SK-N-SH (cell line): ENCODE measurements at regions of chr16 and their contacts with region 1.

Region 1: DNA sequence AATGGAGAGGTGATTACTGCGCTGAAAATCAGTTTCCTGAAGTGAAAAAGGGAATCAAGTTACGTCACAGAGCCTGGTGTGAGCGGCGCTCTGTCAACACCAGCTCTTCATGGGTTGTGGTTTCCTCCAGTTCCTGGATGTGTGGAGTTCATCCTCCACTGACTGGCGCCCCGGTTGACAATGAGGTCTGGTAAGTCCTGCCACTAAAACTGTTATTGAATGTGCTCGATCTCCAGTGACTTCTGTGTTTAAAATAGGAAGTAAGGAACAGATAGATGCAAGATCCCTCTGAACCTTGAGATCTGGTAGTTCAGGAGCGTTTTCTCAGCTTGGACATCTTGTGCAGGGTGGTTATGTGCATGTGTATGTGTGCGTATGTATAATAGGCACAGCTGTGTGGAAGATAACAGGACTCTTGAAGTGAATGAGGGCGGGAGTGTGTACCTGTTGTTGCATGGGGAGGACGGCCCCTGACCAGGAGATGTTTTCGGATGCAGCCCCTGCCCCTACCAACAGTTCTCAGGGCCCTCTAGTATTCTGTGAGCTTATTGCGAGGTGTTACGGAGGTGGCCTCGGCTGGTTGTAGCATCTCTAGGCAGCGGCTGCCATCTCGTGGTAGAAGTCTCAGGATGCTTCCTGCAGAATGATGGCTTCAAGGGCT is 22.0 kb upstream of the GOT2 start:
- DNase-seq: peak; percentile 75
- H3K4me3 ChIP-seq: no peak overlapping the region; a peak in 1 of 4 replicates
- H3K27ac ChIP-seq: no peak overlapping the region
- H3K4me1 ChIP-seq: no peaks in the 10 kb centered on the region
- H3K27me3 ChIP-seq: no peaks in the 10 kb centered on the region; the same call in 1 of the 2 replicates
- CTCF ChIP-seq: peak; percentile 71
- EP300 ChIP-seq: no peak
- RAD21 ChIP-seq: peak; percentile 94

Region 2: DNA sequence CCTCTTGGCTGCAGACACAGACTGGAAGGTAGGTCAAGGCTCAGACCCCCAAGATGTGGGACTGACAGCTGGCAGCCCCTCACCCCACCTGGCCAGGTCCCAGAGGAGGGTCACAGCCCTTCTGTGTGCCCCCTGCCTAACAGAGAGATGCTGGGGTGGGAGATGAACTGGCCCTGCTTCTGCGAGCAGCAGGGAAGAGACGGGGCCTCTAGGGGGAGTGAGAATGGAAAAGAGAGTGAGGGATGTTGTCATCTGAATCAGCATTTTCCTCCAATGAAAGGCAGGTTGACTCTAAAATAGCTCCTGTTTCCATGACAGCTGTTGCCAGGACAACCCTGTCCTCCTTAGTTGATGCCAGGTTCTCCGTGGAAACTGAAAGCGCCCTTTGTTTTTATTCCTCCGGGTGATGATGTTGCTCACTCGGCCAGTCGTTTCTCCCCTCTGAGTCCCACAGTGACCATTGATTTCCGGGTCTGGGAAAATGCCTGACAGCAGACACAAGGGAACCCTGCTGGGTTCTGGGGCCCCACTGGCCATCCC is 261.1 kb before region 1 on chr16:
- CTCF ChIA-PET with region 1: interaction called, 11 read pairs
- POLR2A ChIA-PET with region 1: no interaction called
- DNase-seq: peak; percentile 93
- H3K4me3 ChIP-seq: peak overlapping the region; percentile 23 to 34; a peak in 2 of 4 replicates
- H3K27ac ChIP-seq: peak overlapping the region; percentile 86 to 97
- H3K4me1 ChIP-seq: peaks cover 6 to 37% of the 10 kb centered on the region in 2 experiments; a peak in 2 of 4 replicates
- H3K27me3 ChIP-seq: no peaks in the 10 kb centered on the region
- CTCF ChIP-seq: peak; percentile 69
- EP300 ChIP-seq: peak; percentile 17 to 38; a peak in 2 of 4 replicates
- RAD21 ChIP-seq: peak; percentile 43

Region 3: GRCh38 chr16:58515125-58515870 is 240.8 kb before region 1 on chr16 and contains the start of gene SETD6:
- CTCF ChIA-PET with region 1: interaction called, 11 read pairs
- POLR2A ChIA-PET with region 1: no interaction called
- DNase-seq: peak; percentile 92
- H3K4me3 ChIP-seq: peak within 1 kb of the TSS; percentile 65 to 82
- H3K27ac ChIP-seq: peak within 1 kb of the TSS; percentile 43 to 80; a peak in 3 of 4 replicates
- H3K4me1 ChIP-seq: peaks cover 0 to 10% of the 10 kb centered on the region in 2 experiments; a peak in 1 of 4 replicates
- H3K27me3 ChIP-seq: no peaks in the 10 kb centered on the region
- CTCF ChIP-seq: no peak
- EP300 ChIP-seq: no peak
- RAD21 ChIP-seq: no peak
- polyA plus RNA-seq, gene SETD6: 17.2 and 22.2 TPM in 2 replicates

Region 4: DNA sequence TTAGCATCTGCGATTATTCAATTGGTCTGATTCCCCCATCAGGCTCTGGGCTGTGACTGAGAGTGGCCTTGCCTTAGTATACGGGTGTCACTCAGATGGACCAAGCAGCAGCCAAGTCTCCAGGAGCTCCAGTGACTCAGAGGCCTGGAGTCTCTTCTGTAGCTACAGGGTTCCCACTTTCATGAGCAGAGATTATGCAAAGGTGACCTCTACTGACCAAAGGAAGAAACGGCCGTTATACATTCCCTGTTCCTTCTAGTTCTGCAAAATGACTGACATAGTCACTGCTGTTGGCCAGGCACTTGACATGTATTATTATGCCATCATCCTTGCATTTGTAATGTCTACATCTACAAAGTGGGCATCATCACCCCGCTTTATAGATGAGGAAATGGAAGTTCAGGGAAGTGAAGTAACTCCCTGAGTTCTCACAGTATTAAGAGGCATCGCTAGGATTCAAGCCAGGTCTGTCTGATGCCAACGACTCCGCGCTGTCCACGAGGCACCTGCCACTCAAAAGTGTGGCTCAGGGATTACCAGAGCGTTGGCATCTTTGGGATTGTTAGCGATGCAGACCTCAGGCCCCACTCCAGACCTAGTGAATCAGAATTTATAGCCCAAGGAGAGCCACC is 94.8 kb before region 1 on chr16:
- CTCF ChIA-PET with region 1: interaction called, 11 read pairs
- POLR2A ChIA-PET with region 1: no interaction called
- DNase-seq: peak; percentile 78
- H3K4me3 ChIP-seq: no peak overlapping the region; a peak in 1 of 4 replicates
- H3K27ac ChIP-seq: no peak overlapping the region
- H3K4me1 ChIP-seq: peaks cover 3 to 18% of the 10 kb centered on the region in 2 experiments; a peak in 1 of 4 replicates
- H3K27me3 ChIP-seq: no peaks in the 10 kb centered on the region
- CTCF ChIP-seq: peak; percentile 78
- EP300 ChIP-seq: no peak
- RAD21 ChIP-seq: peak; percentile 98

Region 5: GRCh38 chr16:58744497-58744896 is 11.6 kb before region 1 on chr16:
- CTCF ChIA-PET with region 1: interaction called, 19 read pairs
- POLR2A ChIA-PET with region 1: no interaction called
- DNase-seq: no peak
- H3K4me3 ChIP-seq: no peak overlapping the region
- H3K27ac ChIP-seq: no peak overlapping the region
- H3K4me1 ChIP-seq: no peaks in the 10 kb centered on the region
- H3K27me3 ChIP-seq: no peaks in the 10 kb centered on the region
- CTCF ChIP-seq: no peak
- EP300 ChIP-seq: no peak
- RAD21 ChIP-seq: no peak

Region 6: DNA sequence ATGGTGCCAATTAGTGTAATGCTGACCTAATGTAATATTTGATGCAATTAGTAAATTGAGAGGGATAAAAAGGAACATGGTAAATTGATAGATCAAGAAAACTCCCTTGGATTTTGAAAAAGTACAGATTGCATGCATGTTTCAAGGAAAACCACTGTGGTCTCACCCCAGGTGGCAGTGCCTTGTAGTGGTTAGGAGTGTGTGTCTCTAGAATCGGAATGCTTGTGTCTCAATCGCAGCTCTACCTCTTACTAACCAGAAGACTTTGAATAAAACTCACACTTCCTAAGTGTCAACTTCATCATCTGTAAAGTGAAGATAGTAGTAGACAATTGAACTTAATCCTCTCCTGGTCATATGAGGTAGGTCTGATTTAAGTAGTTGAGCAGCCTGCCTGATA is 106.9 kb after region 1 on chr16:
- CTCF ChIA-PET with region 1: no interaction called
- POLR2A ChIA-PET with region 1: no interaction called
- DNase-seq: no peak
- H3K4me3 ChIP-seq: no peak overlapping the region
- H3K27ac ChIP-seq: no peak overlapping the region
- H3K4me1 ChIP-seq: peaks cover 0 to 8% of the 10 kb centered on the region in 2 experiments; a peak in 2 of 4 replicates
- H3K27me3 ChIP-seq: no peaks in the 10 kb centered on the region
- CTCF ChIP-seq: no peak
- EP300 ChIP-seq: no peak
- RAD21 ChIP-seq: no peak